ENCODE measurements at regions of chr11 and their contacts with region 1.

Region 1: GRCh38 chr11:13183094-13183825 is 94.3 kb upstream of the BMAL1 start:
- DNase-seq: peak; percentile 26
- H3K4me3 ChIP-seq: peak overlapping the region; percentile 40 to 52; a peak in 3 of 4 replicates
- H3K27ac ChIP-seq: no peak overlapping the region
- H3K4me1 ChIP-seq: no peaks in the 10 kb centered on the region; a peak in 1 of 4 replicates
- H3K27me3 ChIP-seq: no peaks in the 10 kb centered on the region
- CTCF ChIP-seq: peak; percentile 63
- EP300 ChIP-seq: no peak
- RAD21 ChIP-seq: peak; percentile 73

Region 2: DNA sequence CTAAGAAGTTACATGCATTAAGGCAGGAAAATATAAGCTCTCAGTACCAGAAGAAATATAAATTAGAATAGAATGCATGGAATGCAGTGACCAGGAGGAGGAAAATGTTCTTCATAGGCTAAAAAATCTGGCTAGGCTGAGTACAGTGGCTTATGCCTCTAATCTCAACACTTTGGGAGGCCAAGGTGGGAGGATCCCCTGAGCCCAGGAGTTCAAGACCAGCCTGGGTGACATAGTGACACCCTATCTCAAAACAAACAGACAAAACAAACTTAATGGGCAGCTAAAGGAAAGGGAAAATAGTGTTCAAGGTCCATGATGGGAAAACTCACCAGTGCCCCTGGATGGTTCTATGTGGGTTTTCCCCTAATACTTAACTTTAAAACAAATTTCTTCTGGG is 252.4 kb before region 1 on chr11:
- CTCF ChIA-PET with region 1: no interaction called
- POLR2A ChIA-PET with region 1: no interaction called
- DNase-seq: no peak
- H3K4me3 ChIP-seq: no peak overlapping the region
- H3K27ac ChIP-seq: no peak overlapping the region
- H3K4me1 ChIP-seq: no peaks in the 10 kb centered on the region; a peak in 1 of 4 replicates
- H3K27me3 ChIP-seq: no peaks in the 10 kb centered on the region
- CTCF ChIP-seq: no peak
- EP300 ChIP-seq: no peak
- RAD21 ChIP-seq: no peak

Region 3: GRCh38 chr11:12979928-12980689 is 203.2 kb before region 1 on chr11:
- CTCF ChIA-PET with region 1: interaction called, 12 read pairs
- POLR2A ChIA-PET with region 1: no interaction called
- DNase-seq: no peak
- H3K4me3 ChIP-seq: no peak overlapping the region
- H3K27ac ChIP-seq: no peak overlapping the region
- H3K4me1 ChIP-seq: no peaks in the 10 kb centered on the region
- H3K27me3 ChIP-seq: peaks cover 10% of the 10 kb centered on the region; the same call in 1 of the 2 replicates
- CTCF ChIP-seq: no peak
- EP300 ChIP-seq: no peak
- RAD21 ChIP-seq: no peak

Region 4: DNA sequence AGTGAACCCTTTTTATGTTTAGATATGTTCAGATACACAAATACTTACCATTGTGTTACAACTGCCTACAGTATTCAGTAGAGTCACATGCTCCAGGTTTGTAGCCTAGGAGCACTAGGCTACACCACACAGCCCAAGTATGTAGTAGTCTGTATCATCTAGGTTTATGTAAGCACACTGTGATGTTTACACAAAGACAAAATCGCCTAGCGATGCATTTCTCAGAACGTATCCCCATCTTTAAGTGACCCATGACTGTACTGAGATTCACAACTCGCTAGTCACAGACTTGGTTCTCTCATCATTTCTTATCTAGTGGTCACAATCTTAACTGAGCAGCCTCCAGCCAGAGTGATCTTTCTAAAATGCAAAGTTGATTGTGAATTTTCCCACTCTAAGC is 54.9 kb before region 1 on chr11:
- CTCF ChIA-PET with region 1: no interaction called
- POLR2A ChIA-PET with region 1: no interaction called
- DNase-seq: no peak
- H3K4me3 ChIP-seq: no peak overlapping the region
- H3K27ac ChIP-seq: no peak overlapping the region
- H3K4me1 ChIP-seq: no peaks in the 10 kb centered on the region
- H3K27me3 ChIP-seq: no peaks in the 10 kb centered on the region
- CTCF ChIP-seq: no peak
- EP300 ChIP-seq: no peak
- RAD21 ChIP-seq: no peak

Region 5: DNA sequence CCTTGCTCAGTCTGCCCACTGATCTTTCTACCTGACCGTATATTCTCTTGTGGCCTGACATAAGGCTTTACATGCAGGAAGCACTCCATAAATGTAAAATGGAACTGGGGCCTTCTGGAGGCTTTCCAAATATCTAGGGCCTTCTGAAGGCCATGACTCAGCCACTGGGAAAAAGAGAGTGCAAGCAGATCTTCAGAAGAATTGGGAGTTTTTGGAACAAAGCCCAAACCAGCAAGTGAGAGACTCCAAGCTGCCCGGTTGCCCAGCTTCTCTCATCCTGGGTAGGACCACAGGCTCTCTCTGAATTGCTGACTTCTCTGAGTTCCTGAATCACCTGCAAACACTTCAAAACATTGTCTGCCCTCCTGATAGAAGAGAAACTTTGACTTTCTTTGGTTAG is 13.6 kb before region 1 on chr11:
- CTCF ChIA-PET with region 1: interaction called, 34 read pairs
- POLR2A ChIA-PET with region 1: no interaction called
- DNase-seq: no peak
- H3K4me3 ChIP-seq: no peak overlapping the region
- H3K27ac ChIP-seq: no peak overlapping the region
- H3K4me1 ChIP-seq: peaks cover 0 to 2% of the 10 kb centered on the region in 2 experiments; a peak in 1 of 4 replicates
- H3K27me3 ChIP-seq: no peaks in the 10 kb centered on the region
- CTCF ChIP-seq: no peak
- EP300 ChIP-seq: no peak
- RAD21 ChIP-seq: no peak

Region 6: GRCh38 chr11:13316528-13316961 is 133.3 kb after region 1 on chr11:
- CTCF ChIA-PET with region 1: no interaction called
- POLR2A ChIA-PET with region 1: no interaction called
- DNase-seq: no peak
- H3K4me3 ChIP-seq: no peak overlapping the region
- H3K27ac ChIP-seq: peak overlapping the region; percentile 52 to 72
- H3K4me1 ChIP-seq: peaks cover 6 to 31% of the 10 kb centered on the region in 2 experiments; a peak in 3 of 4 replicates
- H3K27me3 ChIP-seq: no peaks in the 10 kb centered on the region
- CTCF ChIP-seq: no peak
- EP300 ChIP-seq: no peak
- RAD21 ChIP-seq: no peak

Measured in SK-N-SH (cell line).